ENCODE measurements at regions of chr3 and their contacts with region 1.

Region 1: DNA sequence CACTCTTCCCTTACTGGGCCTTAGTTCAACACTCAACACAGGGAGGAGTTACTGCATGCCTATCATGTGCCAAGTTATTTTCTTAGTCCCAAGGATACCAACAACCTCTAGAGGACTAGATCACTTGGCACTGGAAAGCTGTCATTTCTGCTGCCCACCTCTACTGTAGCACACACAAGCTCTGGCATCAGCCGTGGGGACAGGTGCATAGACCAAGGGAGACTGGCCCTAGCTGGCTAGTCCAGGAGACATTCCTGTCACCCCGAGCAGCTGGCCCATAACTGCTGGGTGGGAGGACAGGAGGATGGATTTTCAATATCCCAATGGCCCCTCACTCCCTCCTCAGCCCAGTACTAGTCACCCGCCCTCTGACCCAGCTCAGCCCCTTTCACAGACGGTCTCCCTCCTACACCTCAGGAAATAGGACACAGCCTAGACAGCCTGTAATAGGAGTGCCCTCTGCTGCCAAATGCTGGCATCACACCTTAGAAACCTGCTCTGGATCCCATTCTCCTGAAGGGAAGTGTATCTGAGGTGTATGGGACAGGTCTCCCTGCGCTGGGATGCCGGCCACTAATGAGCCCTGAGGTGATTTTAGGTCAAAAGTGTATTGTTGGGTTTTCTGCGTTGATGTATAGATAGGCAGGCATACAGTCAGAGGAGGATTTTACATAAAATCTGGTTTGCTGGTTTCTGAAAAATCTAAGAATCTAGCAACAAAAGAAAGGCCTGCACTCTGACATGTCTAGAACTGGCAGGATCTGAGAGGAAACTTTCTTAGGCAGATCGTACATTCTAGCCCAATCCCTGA is 3.4 kb upstream of the DZIP1L start:
- DNase-seq: peak; percentile 75
- H3K4me3 ChIP-seq: no peak overlapping the region
- H3K27ac ChIP-seq: no peak overlapping the region
- H3K4me1 ChIP-seq: no peaks in the 10 kb centered on the region
- H3K27me3 ChIP-seq: no peaks in the 10 kb centered on the region
- CTCF ChIP-seq: peak; percentile 66

Region 2: DNA sequence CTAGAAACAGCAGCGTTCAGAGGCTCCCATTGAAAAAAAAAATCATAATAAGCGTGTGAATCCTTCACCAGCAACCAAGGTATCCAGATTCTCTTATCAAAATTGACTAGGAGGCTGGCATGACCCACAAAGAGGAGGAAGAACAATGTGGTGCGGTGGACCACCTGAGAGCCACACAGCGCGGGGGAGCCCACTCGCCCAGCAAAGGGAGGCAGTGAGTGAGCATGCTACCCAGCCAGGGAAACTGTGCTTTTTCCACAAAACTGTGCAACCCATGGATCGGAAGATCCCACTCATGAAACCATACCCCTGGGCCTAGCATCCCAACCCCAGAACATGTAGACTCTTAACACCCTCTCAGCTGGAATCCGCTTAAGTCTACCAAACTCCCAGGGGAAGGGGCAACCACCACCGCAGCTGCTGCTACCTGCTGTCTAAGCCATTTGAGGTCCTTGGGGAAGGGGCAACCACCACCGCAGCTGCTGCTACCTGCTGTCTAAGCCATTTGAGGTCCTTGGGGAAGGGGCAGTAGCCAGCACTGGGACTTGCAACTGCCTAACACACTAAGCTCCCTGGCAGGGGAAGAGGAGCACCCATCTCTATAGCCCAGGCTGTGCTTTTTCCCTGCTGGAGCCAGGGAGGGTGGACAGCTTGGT is 211.7 kb before region 1 on chr3:
- intact Hi-C with region 1: no loop called
- DNase-seq: no peak
- H3K4me3 ChIP-seq: no peak overlapping the region
- H3K27ac ChIP-seq: no peak overlapping the region
- H3K4me1 ChIP-seq: no peaks in the 10 kb centered on the region
- H3K27me3 ChIP-seq: no peaks in the 10 kb centered on the region
- CTCF ChIP-seq: no peak

Region 3: DNA sequence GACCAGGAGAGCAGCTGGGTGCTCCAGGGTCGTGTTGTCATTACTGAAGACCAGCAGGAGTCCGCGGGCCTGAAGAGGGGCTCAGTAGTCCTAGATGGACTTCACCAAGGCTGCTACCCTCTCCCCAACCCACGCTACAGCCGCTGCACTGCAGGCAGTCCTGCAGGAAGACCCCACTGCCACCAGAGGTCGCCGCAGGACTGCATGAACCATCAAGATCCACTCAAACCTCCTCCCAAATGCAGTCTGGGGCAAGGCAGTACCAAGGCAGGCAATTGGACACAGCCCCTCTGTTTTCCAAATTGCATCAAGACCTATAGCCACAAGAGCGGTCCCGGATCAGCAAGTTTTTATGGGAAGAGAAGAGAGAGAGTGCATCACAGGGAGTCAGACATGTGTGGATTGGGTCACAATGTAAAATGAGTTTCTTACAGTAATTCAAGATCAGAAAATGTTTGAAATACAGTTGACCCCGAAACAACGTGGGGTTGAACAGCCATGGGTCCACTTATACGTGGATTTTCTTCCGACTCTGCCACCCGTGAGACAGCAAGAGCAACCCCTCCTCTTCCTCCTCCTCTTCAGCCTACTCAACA is 50.1 kb before region 1 on chr3:
- intact Hi-C with region 1: loop called (anchors 2 kb)
- DNase-seq: peak; percentile 75
- H3K4me3 ChIP-seq: no peak overlapping the region
- H3K27ac ChIP-seq: no peak overlapping the region
- H3K4me1 ChIP-seq: no peaks in the 10 kb centered on the region
- H3K27me3 ChIP-seq: no peaks in the 10 kb centered on the region
- CTCF ChIP-seq: peak; percentile 96

Measured in colonic mucosa (tissue), 4 donors.